HEK293 (cell line): ENCODE measurements at regions of chr19 and their contacts with region 1.

Region 1: GRCh38 chr19:35352448-35353304 is 5.0 kb downstream of the FFAR1 start:
- H3K4me3 ChIP-seq: no peak overlapping the region
- H3K27ac ChIP-seq: no peak overlapping the region
- H3K4me1 ChIP-seq: no peaks in the 10 kb centered on the region
- CTCF ChIP-seq: peak; percentile 95

Region 2: DNA sequence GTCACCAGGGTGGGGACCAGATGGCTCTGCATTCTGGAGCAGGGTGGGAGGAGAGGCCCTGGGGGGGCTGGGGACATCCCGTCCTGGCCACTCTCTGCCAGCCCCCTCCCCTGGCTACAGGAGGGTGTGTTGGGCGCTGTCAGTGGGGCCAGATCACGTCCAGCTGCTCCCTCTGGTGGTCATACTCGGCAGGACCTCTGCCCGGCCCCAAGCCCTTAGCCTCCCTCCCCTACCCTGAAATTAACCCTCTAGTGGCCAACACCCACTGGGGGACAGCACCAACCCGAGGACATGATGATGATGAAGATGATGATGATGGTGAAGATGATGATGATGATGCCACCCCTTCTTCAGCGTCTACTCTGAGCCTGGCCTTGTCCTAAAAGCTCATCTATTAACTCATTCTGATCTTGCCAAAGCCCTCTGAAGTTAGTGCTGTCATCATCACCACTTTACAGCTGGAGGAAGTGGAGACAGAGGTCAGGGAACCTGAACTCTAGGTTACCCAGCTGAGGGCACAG is 217.2 kb before region 1 on chr19:
- CTCF ChIA-PET with region 1: no interaction called
- POLR2A ChIA-PET with region 1: no interaction called
- H3K4me3 ChIP-seq: no peak overlapping the region
- H3K27ac ChIP-seq: no peak overlapping the region; the same call in 1 of the 2 replicates
- H3K4me1 ChIP-seq: peaks cover 3% of the 10 kb centered on the region
- CTCF ChIP-seq: peak; percentile 98

Region 3: DNA sequence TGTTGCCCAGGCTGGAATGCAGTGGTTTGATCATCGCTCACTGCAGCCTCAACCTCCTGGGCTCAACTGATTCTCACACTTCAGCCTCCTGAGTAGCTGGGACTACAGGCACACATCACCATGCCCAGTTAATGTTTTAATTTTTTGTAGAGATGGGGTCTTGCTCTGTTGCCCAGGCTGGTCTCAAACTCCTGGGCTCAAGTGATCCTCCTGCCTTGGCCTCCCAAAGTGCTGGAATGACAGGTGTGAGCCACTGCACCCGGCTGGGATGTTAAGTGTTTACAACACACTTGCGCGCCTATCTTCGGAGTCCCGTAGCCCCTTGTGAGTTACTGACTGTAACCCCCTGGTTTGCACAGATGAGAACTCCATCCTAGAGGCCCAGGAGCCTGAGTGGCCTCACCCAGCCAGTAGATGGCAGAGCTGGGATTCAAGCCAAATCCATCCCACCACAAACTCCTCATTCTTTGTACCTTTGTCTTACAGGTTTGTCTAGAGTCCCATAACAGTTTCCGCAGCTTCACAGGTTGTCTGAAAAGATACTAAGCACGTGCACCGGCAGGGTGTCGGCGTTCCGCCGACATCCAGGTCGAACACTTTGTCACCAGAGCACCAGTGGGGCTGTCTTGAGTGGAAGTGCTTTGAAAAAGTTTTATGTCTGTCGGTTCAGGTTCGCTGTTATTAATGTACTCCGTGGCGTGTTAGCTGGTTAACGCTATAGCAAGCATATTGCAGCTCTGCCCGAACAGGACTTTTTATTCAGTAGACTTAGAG is 46.0 kb before region 1 on chr19:
- CTCF ChIA-PET with region 1: interaction called, 11 read pairs
- POLR2A ChIA-PET with region 1: no interaction called
- H3K4me3 ChIP-seq: no peak overlapping the region
- H3K27ac ChIP-seq: no peak overlapping the region
- H3K4me1 ChIP-seq: no peaks in the 10 kb centered on the region
- CTCF ChIP-seq: peak; percentile 80

Region 4: DNA sequence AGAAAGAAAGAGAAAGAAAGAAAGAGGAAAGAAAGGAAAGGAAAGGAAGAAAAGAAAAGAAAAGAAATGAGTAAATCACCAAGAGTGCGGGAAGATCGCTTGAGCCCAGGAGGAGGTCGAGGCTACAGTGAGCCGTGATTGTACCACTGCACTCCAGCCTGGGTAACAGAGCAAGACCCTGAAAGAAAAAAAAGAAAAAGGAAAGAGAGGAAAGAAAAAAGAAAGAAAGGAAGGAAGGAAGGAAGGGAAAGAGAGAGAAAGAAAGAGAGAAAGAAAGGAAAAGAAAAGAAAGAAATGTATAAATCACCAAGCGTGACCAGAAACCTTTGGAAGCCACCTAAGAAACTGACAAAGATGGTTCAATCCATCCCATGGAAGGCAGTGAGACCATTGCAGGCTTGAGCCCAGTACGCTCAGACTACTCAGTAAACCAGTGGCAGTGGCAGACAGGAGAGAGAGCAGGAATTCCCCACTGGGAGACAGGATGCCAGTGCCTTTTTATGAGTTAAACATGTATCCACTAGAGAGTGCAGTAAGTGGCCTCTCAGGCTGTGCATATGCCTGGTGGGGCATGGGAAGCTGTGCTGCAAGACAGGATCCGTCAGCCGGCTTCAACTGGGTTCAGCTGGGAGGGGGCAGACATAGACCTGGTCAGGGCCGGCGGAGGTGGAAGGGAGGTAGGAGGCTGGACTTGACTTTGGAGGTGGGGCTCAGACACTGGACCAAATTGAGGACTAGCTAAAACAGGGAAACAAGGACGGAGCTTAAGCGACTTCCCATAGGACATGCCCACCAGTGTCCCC is 23.0 kb after region 1 on chr19:
- CTCF ChIA-PET with region 1: interaction called, 26 read pairs
- POLR2A ChIA-PET with region 1: interaction called, 6 read pairs
- H3K4me3 ChIP-seq: no peak overlapping the region
- H3K27ac ChIP-seq: no peak overlapping the region
- H3K4me1 ChIP-seq: no peaks in the 10 kb centered on the region
- CTCF ChIP-seq: no peak

Region 5: DNA sequence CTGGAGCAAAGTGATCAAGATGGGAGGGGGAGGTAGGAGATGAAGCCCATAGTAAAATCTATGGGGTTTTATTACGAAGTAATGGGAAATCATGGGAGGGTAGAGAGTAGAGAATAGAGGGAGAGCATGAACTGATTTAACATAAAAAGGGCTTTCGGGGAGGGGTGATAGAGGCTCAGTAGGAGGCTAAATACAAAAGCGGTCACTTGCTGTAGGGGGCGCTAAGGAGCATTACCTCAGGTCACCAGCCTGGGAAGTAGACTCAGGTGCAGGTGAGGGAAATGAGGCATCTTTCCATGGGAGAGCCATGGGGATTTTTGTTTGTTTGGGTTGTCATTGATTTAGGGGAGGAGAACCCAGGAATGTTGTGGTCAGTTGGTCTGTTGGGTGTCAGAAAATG is 123.5 kb after region 1 on chr19:
- CTCF ChIA-PET with region 1: interaction called, 157 read pairs
- POLR2A ChIA-PET with region 1: no interaction called
- H3K4me3 ChIP-seq: no peak overlapping the region
- H3K27ac ChIP-seq: no peak overlapping the region
- H3K4me1 ChIP-seq: peaks cover 13% of the 10 kb centered on the region
- CTCF ChIP-seq: peak; percentile 76

Region 6: DNA sequence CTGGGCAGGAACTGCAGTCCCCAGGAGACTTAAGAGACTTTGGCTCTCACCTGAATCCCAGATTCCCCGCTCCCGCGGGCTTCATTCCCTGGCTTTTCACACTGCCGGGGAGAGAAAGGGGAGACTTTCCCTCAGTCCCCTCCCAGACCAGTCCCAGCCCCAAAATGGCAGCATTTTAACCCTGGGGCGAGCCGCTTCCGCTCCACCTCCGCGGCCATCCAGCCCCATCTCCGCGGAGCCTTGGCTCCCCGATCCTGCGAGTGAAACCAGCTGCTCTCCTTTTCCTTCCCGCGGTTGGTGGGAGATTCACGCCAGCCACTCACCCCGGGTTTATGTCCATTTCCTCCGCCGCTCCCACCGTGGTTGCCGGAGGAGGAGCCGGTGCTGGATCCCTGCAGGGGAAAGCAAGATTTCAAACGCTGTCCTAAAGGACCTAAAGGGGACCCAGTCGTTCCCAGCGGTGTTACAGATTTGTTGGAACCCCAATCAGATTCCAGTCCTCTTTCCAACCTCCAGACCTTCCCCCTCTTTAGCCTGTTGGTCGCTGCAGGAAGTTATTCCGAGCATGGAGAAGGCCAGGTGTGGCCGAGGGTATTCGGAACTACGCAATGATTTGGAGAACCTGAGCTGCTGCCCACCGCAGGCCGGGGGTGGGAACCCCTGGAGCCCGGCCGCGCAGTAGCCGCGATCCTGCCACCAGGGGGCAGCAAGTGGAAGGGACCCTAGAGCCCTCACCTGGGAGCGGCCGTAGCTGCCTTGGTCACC is 157.4 kb after region 1 on chr19:
- CTCF ChIA-PET with region 1: interaction called, 53 read pairs
- POLR2A ChIA-PET with region 1: interaction called, 5 read pairs
- H3K4me3 ChIP-seq: peak overlapping the region; percentile 48
- H3K27ac ChIP-seq: peak overlapping the region; percentile 99
- H3K4me1 ChIP-seq: peaks cover 15% of the 10 kb centered on the region
- CTCF ChIP-seq: peak; percentile 100

Region 7: DNA sequence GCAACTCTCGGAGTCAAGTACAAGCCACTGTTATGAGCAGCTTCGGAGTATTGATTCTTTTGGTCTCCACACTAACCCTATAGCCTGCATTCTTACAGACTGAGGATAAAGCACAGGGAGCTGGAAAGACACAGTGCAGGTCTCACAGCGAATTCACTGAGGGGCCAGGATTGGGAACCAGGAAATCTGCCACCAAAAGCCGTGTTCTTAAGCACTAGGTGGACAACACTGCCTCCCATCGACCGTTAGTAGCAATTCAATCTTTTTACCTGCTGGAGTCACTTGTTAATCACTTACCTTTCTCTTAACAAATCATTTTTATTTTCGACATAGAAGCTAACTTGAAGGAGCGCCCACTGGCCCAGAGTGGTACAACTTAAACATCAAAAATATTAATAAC is 239.6 kb after region 1 on chr19:
- CTCF ChIA-PET with region 1: interaction called, 14 read pairs
- POLR2A ChIA-PET with region 1: no interaction called
- H3K4me3 ChIP-seq: no peak overlapping the region
- H3K27ac ChIP-seq: no peak overlapping the region
- H3K4me1 ChIP-seq: 0 out of 2 replicates have a peak, but pooled peaks cover 2% of the 10 kb centered on the region
- CTCF ChIP-seq: 0 out of 2 replicates have a peak, but pooled peaks have one; percentile 34